Posterior cingulate gyrus (tissue), 11 donors: ENCODE measurements at regions of chr9 and their contacts with region 1.

Region 1: DNA sequence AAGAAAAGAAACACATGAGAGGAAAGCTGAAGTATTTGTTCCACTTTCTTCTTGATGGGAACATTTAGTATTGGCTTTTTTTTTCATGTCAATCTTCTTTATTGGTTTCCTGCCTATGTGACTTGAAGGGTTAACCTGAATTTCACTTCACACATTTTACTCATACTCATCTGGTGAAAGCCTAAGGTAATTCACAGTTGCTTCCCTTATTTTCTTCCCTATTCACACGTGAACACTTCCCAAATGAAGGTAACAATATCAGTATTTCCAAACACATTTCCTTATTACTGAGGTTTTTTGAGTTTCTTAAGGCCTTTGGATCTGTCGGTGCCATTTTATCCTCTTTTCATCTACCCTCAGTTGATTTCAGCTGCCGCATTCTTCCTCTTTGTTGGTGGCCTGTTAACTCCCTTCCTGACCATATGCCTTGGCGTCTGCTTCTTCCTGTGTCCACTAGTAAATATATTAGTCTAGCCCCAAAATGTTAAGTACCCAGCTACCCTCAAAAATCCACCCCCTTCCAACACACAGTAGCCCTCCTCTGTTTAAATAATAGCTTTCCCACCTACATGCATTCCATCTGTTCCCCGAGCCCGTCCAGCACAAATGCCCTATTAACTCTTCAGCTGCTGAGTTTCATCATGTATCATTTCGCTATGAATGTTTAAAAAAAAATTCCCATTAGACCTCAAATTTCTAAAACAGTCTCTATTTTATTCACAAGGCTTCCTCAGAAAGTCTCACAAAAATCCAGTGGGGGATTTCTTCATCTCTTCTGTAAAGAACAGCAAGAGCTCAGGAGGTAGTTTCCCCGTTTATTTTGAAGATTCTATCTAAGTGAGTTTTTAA is 97.3 kb downstream of the USP20 start:
- DNase-seq: no peak

Region 2: GRCh38 chr9:129898191-129898590 is 34.3 kb before region 1 on chr9:
- intact Hi-C with region 1: loop called (anchors 5 kb)
- DNase-seq: peak in 1 of 10 donors; percentile 22